Activated T-helper 1 cell treated with anti-CD3 and anti-CD28 coated beads, Interleukin-12 subunit alpha, Interleukin-12 subunit beta, Interleukin-2, Interleukin-4 antibody, amounts not matched to agents 30 ng/mL and 10 ng/mL and 1 ng/mL, durations not matched to agents 14 hours and 24 hours and 36 hours (primary cell): ENCODE measurements at regions of chr7 and their contacts with region 1.

Region 1: DNA sequence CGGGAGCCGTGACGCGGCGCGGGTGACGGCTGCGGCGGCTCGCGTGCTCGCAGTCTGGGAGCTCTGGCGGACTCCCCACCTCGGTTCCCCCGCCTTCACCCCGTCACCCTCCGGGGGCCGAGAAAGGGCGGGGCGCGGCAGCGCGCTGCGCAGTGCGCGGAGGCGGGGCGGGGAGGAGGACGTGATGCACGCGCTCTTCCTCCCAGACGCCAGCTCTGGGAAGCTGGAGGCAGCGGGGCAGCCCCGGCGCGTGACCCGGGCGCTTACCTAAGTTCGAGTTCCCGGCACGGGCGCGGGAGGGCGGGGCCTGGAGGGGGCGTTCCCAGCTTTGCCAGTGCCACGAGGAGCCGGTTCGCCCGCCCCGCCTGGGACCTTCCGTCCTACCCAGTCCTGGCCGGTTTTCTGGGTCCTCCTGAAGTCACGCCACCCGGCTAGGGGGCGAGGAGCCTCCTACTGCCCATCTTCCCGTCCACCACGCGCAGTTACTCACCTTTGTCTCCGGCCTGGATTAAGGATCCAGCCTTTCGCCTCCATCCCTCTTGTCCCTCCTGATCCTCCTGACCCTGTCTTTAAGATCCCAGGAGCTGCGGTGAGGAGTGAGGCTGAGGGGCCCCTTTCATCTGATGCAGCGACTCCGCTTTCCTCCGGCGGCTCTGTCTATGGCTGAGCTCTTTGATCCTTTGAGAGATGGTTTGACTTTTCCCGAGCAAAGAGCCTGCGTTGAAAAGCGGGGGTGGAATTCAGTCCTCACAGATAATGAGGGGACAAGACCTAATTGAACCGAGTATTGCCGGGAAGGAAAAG is 470 bp upstream of the NAMPT start:
- DNase-seq: peak; percentile 96
- H3K4me3 Mint-ChIP-seq: peak overlapping the region; percentile 95
- H3K27ac Mint-ChIP-seq: peak overlapping the region; percentile 99
- H3K4me1 Mint-ChIP-seq: peaks cover 53% of the 10 kb centered on the region
- H3K27me3 Mint-ChIP-seq: peaks cover 2% of the 10 kb centered on the region

Region 2: GRCh38 chr7:106112117-106112971 is 172.9 kb before region 1 on chr7 and contains the start of gene SYPL1:
- intact Hi-C with region 1: loop called (anchors 2 kb)
- DNase-seq: peak; percentile 86
- H3K4me3 Mint-ChIP-seq: peak within 1 kb of the TSS; percentile 86
- H3K27ac Mint-ChIP-seq: peak within 1 kb of the TSS; percentile 88
- H3K4me1 Mint-ChIP-seq: peaks cover 47% of the 10 kb centered on the region
- H3K27me3 Mint-ChIP-seq: no peaks in the 10 kb centered on the region
- total RNA-seq, gene SYPL1: 22.3 and 24.9 TPM in 2 replicates

Region 3: GRCh38 chr7:106346678-106347217 is 61.5 kb after region 1 on chr7:
- intact Hi-C with region 1: loop called (anchors 1 kb)
- DNase-seq: peak; percentile 76
- H3K4me3 Mint-ChIP-seq: peak overlapping the region; percentile 63
- H3K27ac Mint-ChIP-seq: peak overlapping the region; percentile 99
- H3K4me1 Mint-ChIP-seq: peaks cover 53% of the 10 kb centered on the region
- H3K27me3 Mint-ChIP-seq: peaks cover 1% of the 10 kb centered on the region

Region 4: GRCh38 chr7:106418094-106418493 is 132.8 kb after region 1 on chr7:
- intact Hi-C with region 1: loop called (anchors 1 kb)
- DNase-seq: no peak
- H3K4me3 Mint-ChIP-seq: peak overlapping the region; percentile 5
- H3K27ac Mint-ChIP-seq: peak overlapping the region; percentile 73
- H3K4me1 Mint-ChIP-seq: peaks cover 55% of the 10 kb centered on the region
- H3K27me3 Mint-ChIP-seq: peaks cover 3% of the 10 kb centered on the region

Region 5: DNA sequence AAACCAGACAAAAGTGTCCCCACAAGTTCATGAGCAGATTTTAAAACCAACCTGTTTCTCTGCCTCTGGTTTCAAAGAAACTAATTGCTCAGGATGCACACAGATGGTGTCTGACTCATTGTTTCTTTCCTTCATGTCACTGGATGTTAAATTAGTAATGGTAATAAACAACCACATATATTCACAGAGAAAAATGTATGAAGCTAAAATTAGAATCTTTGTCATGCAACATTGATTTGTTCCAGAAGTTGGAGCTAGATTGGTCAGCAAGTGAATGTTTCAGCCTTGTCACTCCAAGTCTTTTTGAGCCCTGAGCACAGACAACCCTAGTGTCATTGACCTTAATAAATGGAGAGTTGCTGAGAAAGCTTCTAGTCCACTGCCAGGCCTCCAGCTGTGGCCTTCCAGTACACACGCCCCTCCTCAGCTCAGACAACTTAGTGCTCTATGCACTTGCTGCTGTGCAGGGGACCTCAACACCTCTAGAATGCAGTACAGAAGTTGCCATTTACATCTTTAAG is 199.8 kb after region 1 on chr7:
- intact Hi-C with region 1: loop called (anchors 1 kb)
- DNase-seq: no peak
- H3K4me3 Mint-ChIP-seq: peak overlapping the region; percentile 19
- H3K27ac Mint-ChIP-seq: peak overlapping the region; percentile 81
- H3K4me1 Mint-ChIP-seq: peaks cover 41% of the 10 kb centered on the region
- H3K27me3 Mint-ChIP-seq: no peaks in the 10 kb centered on the region

Region 6: DNA sequence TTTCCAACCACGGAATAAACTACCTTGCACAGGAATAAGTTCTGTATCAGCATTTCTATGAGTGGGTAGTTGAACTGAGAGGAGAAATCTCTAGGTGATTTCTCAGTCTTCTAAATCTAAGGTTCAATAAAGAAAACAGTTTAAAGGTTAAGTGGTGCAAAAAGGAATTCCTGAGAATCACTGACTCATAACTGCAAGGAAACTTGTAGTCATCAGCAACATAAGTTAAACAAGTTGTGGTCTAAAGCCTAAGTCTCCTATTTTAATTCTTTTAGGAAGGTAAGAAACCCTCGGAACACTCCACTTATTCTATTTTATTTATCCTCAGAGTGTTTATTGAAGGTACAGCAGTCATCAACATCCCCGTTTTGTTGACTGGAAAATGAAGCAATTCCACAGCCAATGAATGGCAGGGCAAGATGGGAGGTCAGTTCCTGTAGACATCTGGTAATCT is 487.4 kb after region 1 on chr7:
- intact Hi-C with region 1: loop called (anchors 1 kb)
- DNase-seq: no peak
- H3K4me3 Mint-ChIP-seq: peak overlapping the region; percentile 47
- H3K27ac Mint-ChIP-seq: peak overlapping the region; percentile 98
- H3K4me1 Mint-ChIP-seq: peaks cover 63% of the 10 kb centered on the region
- H3K27me3 Mint-ChIP-seq: no peaks in the 10 kb centered on the region